ENCODE measurements at regions of chr11 and their contacts with region 1.

Region 1: DNA sequence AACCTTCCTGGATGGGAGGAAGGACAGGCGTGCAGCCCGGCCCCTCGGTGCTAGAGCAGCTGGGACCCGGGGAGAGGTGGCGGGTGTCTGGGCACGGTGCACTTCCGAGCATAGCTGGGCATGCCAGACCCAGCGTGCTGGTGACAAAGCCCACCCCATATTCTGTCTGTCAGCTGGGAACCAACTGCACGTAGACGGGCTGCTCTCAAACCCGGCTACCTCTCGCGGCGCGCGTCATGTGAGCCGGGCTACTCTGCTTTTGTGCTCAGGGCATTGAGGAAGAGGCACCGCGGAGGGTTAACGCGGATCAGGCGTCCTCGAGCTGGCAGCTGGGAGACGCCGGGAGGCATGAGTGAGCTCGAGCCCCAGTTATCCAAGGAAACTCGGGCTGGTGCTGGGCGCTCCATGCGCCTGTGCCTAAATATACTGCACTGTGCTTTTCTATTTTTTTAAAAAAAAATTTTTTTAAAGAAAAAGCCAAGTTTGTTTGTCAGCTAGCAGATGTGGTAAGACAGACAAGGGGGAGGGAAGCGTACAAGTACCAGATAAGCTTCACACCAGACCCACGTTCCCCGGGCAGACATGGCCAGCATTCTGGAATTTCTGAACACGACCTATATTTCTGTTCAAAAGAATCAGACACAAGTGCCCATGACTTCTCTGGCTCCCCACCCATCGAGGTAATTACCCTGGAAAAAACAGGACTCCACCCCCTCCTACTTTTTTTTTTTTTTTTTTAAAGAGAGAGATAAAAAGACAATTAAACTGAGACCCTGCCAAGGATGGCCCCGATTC is 425.6 kb downstream of the SHANK2 start:
- DNase-seq: no peak
- H3K4me3 ChIP-seq: peak overlapping the region; percentile 50 to 60 (median 52)
- H3K27ac ChIP-seq: peak overlapping the region; percentile 69 to 79 (median 76)
- H3K4me1 ChIP-seq: peaks cover 4 to 26% (median 21%) of the 10 kb centered on the region in 4 donors
- H3K27me3 ChIP-seq: peaks cover 0 to 5% (median 0%) of the 10 kb centered on the region in 4 donors
- CTCF ChIP-seq: no peak
- EP300 ChIP-seq: no peak
- POLR2A ChIP-seq: no peak

Region 2: DNA sequence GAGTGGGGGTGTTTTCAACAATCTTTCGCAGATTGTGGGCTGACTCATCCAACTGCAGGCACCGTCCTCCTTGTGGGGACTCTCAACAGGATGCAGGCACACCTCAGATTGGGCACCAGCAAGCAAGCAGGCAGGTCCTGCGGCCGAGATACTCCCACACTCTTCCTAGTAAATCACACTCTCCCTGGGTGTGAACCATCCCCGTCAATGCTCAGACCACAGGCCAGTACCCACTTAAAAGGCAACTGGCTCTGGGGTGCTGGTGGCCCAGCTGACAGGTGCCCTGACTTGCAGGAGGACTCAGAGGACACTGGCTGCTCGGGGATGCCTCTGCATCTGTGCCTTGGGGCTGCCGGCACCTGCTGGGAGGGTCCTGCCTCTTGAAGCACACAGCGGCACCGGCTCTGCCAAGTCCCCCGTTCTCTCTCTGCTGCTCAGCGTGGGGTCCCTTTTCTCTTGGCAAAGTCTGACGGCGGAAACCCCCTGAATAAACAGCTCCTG is 145.9 kb before region 1 on chr11:
- intact Hi-C with region 1: no loop called
- DNase-seq: no peak
- H3K4me3 ChIP-seq: no peak overlapping the region
- H3K27ac ChIP-seq: no peak overlapping the region
- H3K4me1 ChIP-seq: no peaks in the 10 kb centered on the region
- H3K27me3 ChIP-seq: no peaks in the 10 kb centered on the region
- CTCF ChIP-seq: no peak
- EP300 ChIP-seq: no peak
- POLR2A ChIP-seq: no peak

Region 3: DNA sequence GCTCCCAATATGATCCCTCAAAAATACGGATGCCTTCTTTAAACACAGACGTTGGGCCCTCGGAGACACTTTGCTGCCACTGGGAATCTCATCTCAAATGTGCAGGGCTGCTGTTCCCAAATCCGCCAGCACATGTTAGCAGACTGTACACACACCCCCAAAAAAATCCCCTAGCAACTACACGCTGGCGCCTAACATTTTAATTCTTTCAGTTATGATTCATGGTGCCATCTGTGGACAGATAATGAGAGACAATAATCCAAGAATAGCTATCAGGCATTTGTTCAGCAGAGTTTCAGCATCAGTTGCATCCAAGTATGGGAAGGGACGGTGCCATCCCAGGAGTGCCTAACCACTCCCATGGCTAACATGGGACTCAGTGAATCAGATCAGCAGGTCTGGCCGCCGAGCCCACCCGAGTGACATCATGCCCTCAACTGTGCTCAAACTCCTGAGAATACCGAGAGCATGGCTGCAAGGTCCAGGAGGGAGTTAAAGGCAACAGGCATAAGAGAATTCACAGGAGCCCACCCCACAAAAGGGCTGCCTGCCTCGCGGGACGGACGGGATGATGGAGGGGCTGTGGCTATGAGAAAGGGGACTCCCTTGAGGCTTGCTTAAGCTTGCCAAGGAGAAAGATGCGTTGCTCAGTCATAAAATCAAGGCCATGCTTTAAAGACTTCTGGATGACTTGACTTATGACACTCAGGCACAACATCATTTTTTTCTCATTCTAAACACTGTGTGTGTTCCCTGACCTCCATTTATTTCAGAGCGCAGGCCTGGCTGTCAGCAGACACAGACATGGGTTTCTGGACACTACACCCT is 88.6 kb after region 1 on chr11:
- intact Hi-C with region 1: loop called (anchors 5 kb)
- DNase-seq: no peak
- H3K4me3 ChIP-seq: no peak overlapping the region
- H3K27ac ChIP-seq: peak overlapping the region; percentile 85 to 88 (median 86)
- H3K4me1 ChIP-seq: peaks cover 0 to 34% (median 21%) of the 10 kb centered on the region in 4 donors
- H3K27me3 ChIP-seq: no peaks in the 10 kb centered on the region
- CTCF ChIP-seq: no peak
- EP300 ChIP-seq: no peak
- POLR2A ChIP-seq: no peak

Measured in esophagus muscularis mucosa (tissue), 4 donors.